ENCODE measurements at regions of chr19 and their contacts with region 1.

Region 1: DNA sequence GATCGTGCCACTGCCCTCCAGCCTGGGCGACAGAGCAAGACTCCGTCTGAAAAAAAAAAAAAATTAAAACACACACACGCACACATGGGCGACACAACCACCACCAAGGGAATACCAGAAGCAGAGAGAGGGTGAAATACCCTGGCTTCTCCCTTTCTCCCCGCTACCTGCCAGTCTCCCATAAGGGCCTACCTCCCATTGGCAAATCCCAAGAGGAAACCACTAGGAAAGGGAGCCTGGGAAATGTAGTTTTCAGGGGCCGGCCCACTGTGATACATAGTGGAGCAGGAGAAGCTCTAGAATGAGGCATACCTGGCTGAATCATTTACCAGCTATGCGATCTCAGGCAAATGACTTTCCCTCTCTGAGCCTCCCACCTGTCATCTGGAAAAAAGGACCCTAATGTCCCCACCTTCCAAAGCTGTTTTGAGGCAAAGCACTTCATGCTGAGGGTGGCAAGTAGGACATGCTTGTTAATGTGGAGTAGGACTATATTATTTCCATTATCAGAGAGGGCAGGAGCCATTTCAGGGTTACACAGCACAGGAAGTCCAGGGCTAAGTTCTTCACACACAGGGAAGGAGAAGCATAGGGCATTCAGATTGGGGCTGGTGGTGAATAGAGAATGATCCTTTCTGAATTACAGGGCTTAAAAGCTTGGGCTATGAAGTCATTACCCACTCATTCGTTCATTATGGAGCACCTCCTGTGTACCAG is 14.3 kb upstream of the HNRNPUL1 start:
- DNase-seq: no peak

Region 2: DNA sequence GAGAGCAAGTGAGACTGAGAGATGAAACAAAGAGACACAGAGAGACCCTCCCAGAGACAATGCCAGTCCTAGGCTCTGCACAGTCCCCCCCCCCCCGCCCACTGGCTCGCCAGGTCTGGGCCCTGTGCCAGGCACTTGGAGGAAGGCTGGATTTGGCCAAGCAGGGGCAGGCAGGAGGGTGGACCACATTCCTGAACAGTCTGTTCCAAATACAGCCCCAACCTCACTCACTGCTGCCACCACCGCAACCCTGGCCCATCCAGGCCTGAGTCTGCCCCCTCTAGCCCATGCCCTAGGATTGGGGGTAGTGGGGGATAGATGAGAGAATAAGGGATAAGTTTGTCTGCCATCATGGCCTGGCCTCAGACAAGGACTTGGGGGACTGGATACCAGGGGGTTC is 116.6 kb before region 1 on chr19:
- intact Hi-C with region 1: loop called in 1 of 2 experiments (anchors 5 kb)
- DNase-seq: peak; percentile 34

Region 3: GRCh38 chr19:41217741-41218140 is 32.1 kb before region 1 on chr19:
- intact Hi-C with region 1: no loop called
- DNase-seq: no peak

Measured in posterior vena cava (tissue), 2 donors.